WTC11 (cell line): ENCODE measurements at regions of chr11 and their contacts with region 1.

Region 1: DNA sequence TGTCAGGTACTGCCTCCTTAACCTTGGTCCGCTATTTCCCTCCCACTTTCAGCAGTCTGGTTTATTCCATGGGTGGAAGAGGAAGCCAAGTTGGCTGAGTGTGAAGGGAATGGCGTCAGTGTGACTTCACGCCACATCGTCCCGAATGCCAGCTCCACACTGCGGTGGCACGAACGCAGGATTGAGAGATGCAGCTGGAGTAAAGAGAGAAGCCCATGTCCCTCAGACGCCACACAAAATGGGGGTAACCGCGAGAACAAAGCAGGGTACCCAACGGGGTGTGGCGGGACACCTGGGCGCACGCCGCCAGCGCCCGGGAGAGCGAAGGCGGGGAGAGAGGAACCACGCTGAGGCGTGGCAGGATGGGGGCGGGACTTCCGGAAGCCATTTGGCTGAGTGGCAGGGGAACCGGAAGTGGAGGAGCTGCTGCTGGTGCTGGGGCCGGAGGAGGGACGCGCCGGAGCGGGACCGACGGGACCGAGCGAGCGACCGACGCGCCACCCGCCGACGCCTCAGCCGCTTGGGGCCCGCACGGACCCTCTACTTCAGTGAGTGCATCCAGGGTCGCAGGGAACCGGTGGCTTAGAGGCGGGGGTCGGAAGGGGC is at the start of gene PAFAH1B2:
- DNase-seq: peak; percentile 95
- ATAC-seq: peak; percentile 87
- H3K4me3 Mint-ChIP-seq: peak within 1 kb of the TSS; percentile 98
- H3K27ac Mint-ChIP-seq: peak within 1 kb of the TSS; percentile 96
- H3K4me1 Mint-ChIP-seq: peaks cover 33% of the 10 kb centered on the region
- H3K27me3 Mint-ChIP-seq: peaks cover 3% of the 10 kb centered on the region; the same call in 1 of the 2 replicates
- CTCF ChIP-seq: no peak
- total RNA-seq, gene PAFAH1B2: 132 to 138 TPM (median 133 TPM) in 3 replicates

Region 2: GRCh38 chr11:116750070-116750718 is 393.8 kb before region 1 on chr11:
- CTCF ChIA-PET with region 1: interaction called, 13 read pairs
- POLR2A ChIA-PET with region 1: no interaction called
- DNase-seq: no peak
- ATAC-seq: no peak
- H3K4me3 Mint-ChIP-seq: no peak overlapping the region
- H3K27ac Mint-ChIP-seq: no peak overlapping the region
- H3K4me1 Mint-ChIP-seq: no peaks in the 10 kb centered on the region
- H3K27me3 Mint-ChIP-seq: no peaks in the 10 kb centered on the region
- CTCF ChIP-seq: no peak

Region 3: GRCh38 chr11:116879800-116880625 is 264.0 kb before region 1 on chr11:
- CTCF ChIA-PET with region 1: interaction called, 17 read pairs
- POLR2A ChIA-PET with region 1: interaction called, 7 read pairs
- DNase-seq: no peak
- ATAC-seq: peak; percentile 85
- H3K4me3 Mint-ChIP-seq: no peak overlapping the region
- H3K27ac Mint-ChIP-seq: peak overlapping the region; percentile 11; the same call in 1 of the 2 replicates
- H3K4me1 Mint-ChIP-seq: peaks cover 3% of the 10 kb centered on the region; the same call in 1 of the 2 replicates
- H3K27me3 Mint-ChIP-seq: no peaks in the 10 kb centered on the region
- CTCF ChIP-seq: no peak

Region 4: DNA sequence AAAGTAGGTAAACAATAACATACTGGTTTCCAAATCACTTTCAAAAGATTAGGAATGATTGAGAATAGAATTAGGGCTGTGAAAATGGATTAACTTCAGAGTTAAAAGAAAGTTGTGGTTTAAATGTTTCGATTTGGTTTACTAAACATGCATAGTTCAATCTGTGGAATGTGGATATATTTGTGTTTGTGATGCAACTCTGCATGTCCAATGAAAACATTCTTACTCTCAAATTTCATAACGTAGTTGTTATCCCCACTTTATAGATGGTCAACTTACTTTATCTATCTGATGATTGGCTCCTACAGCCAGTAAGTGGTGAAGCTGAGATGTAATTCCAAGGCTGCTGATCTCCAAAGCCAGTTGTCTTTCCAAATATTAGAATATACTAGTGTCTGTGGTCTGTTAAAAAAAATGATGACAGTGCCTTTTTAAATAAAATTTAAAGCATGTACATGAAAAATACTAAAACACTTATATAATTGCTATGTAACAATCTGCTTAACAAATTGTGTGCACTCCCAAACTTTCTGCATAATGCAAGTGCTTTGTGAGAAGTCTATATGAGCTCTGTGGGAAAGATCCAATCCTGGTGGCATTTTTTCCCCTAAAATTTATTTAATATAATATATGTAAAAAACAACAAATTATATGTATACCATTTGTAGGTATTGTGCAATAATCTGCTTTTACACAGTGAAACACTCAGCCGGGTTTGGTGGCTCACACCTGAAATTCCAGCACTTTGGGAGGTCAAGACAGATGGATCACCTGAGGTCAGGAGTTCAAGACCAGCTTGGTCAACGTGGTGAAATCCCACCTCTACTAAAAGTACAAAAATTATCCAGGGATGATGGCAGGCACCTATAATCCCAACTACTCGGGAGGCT is 36.0 kb before region 1 on chr11:
- CTCF ChIA-PET with region 1: interaction called, 11 read pairs
- POLR2A ChIA-PET with region 1: interaction called, 3 read pairs
- DNase-seq: no peak
- ATAC-seq: no peak
- H3K4me3 Mint-ChIP-seq: no peak overlapping the region
- H3K27ac Mint-ChIP-seq: no peak overlapping the region
- H3K4me1 Mint-ChIP-seq: no peaks in the 10 kb centered on the region
- H3K27me3 Mint-ChIP-seq: no peaks in the 10 kb centered on the region
- CTCF ChIP-seq: no peak

Region 5: DNA sequence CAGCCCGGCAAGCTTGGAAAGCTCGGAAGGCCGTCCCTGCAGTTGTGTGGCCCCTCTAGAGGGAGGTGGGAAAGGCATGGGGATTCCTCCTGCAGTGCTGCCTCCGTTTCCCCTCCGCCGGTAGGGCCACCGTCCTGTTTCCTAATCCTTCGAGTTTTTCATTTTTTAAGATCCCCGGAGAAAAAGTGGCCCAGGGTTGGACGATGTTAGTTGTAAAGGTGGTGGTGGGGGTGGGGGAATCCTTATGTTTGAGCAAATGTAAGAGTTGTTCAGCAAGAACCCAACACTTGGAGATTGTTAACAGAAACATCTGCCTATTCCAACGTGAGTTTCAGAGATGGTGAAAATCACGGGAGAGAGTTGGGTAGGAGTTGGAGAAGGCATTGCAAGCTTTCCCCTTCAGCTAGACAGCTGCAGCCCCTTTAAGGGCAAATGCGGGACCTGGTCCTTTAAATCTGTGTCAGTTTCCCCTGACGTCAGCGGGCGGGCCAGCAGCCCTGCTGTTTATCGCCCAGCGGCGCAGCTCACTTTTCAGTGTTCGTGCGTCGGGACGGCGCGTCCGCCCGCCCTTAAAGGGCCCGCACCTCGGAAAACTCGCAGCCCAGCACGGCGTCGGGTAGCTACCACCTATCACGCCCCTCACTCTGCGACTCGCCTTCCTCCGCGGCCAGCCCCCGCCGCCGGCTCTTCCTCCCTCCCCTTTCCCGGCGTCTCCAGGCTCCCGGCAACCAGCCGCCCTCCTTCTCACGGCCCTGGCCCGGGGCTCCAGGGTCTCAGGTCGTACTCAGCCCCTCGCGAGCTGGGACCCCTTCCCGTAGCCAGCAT is 34.4 kb after region 1 on chr11 and contains the start of gene SIDT2:
- CTCF ChIA-PET with region 1: interaction called, 35 read pairs
- POLR2A ChIA-PET with region 1: interaction called, 17 read pairs
- DNase-seq: peak; percentile 94
- ATAC-seq: peak; percentile 87
- H3K4me3 Mint-ChIP-seq: peak within 1 kb of the TSS; percentile 92
- H3K27ac Mint-ChIP-seq: peak within 1 kb of the TSS; percentile 95
- H3K4me1 Mint-ChIP-seq: peaks cover 26% of the 10 kb centered on the region
- H3K27me3 Mint-ChIP-seq: peaks cover 6% of the 10 kb centered on the region
- CTCF ChIP-seq: no peak
- total RNA-seq, gene SIDT2: 20.7 to 27.6 TPM (median 20.9 TPM) in 3 replicates

Region 6: GRCh38 chr11:117327567-117328374 is 183.8 kb after region 1 on chr11 and contains the start of gene CEP164:
- CTCF ChIA-PET with region 1: interaction called, 14 read pairs
- POLR2A ChIA-PET with region 1: no interaction called
- DNase-seq: peak; percentile 93
- ATAC-seq: peak; percentile 97
- H3K4me3 Mint-ChIP-seq: no peak within 1 kb of the TSS
- H3K27ac Mint-ChIP-seq: no peak within 1 kb of the TSS; the same call in 1 of the 2 replicates
- H3K4me1 Mint-ChIP-seq: no peaks in the 10 kb centered on the region
- H3K27me3 Mint-ChIP-seq: no peaks in the 10 kb centered on the region; the same call in 1 of the 2 replicates
- CTCF ChIP-seq: no peak
- total RNA-seq, gene CEP164: 21.0 to 23.5 TPM (median 21.8 TPM) in 3 replicates